CD8-positive, alpha-beta T cell (primary cell): ENCODE measurements at regions of chr14 and their contacts with region 1.

Region 1: DNA sequence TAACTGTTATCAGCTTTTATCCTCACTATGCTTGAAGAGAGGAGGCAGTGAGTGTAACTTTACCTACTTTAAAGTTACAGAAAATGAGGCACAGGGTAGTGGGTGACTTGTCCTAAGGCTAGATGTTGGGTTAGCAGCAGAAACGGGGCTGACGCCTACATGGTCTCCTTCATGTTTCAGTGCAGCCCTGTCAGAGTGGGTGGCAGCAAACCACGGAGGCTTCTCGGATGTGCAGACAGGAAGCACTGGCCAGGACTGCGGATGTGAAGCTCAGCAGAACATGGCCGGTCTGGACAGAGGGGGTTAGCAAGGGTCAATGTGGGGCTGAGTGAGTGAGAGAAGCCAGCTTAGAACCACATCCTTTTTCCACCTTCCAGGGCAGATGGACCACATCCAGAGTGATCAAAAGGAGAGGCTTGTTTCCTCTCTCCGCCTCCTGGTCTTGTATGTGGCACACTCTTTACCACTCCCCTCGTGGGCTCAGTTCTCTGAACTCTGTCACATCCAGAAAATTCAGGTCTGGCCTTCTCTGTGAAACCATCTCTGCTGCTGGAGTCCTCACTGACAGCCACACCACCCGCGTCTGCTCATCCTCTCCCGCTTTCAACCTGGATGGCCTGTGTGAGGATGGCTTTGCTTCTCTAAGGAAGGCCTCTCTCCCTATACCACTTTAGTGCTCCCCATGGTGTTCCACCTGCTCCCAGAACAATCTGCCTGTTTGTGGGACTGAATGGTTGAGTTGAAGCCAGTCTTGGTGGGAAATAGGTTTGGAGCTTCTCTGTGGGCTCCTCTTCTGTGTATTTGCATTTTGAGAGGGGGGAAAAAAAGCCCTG is 14.1 kb downstream of the SUSD6 start:
- DNase-seq: peak; percentile 37 to 81 (median 71)
- ATAC-seq: peak; percentile 90
- H3K4me3 ChIP-seq: peak overlapping the region; percentile 9 to 21
- H3K4me3 Mint-ChIP-seq: peak overlapping the region; percentile 74
- H3K27ac ChIP-seq: peak overlapping the region; percentile 39 to 75
- H3K27ac Mint-ChIP-seq: peak overlapping the region; percentile 90
- H3K4me1 ChIP-seq: peaks cover 70% of the 10 kb centered on the region
- H3K4me1 Mint-ChIP-seq: peaks cover 87% of the 10 kb centered on the region
- H3K27me3 ChIP-seq: no peaks in the 10 kb centered on the region
- H3K27me3 Mint-ChIP-seq: no peaks in the 10 kb centered on the region
- CTCF ChIP-seq: no peak

Region 2: GRCh38 chr14:69666690-69667239 is 41.2 kb after region 1 on chr14:
- CTCF ChIA-PET with region 1: interaction called, 3 read pairs
- POLR2A ChIA-PET with region 1: no interaction called
- intact Hi-C with region 1: loop called (anchors 5 kb)
- DNase-seq: no peak
- ATAC-seq: no peak
- H3K4me3 ChIP-seq: no peak overlapping the region
- H3K4me3 Mint-ChIP-seq: peak overlapping the region; percentile 46
- H3K27ac ChIP-seq: no peak overlapping the region
- H3K27ac Mint-ChIP-seq: peak overlapping the region; percentile 65
- H3K4me1 ChIP-seq: peaks cover 39% of the 10 kb centered on the region
- H3K4me1 Mint-ChIP-seq: peaks cover 88% of the 10 kb centered on the region
- H3K27me3 ChIP-seq: no peaks in the 10 kb centered on the region
- H3K27me3 Mint-ChIP-seq: no peaks in the 10 kb centered on the region
- CTCF ChIP-seq: no peak

Region 3: DNA sequence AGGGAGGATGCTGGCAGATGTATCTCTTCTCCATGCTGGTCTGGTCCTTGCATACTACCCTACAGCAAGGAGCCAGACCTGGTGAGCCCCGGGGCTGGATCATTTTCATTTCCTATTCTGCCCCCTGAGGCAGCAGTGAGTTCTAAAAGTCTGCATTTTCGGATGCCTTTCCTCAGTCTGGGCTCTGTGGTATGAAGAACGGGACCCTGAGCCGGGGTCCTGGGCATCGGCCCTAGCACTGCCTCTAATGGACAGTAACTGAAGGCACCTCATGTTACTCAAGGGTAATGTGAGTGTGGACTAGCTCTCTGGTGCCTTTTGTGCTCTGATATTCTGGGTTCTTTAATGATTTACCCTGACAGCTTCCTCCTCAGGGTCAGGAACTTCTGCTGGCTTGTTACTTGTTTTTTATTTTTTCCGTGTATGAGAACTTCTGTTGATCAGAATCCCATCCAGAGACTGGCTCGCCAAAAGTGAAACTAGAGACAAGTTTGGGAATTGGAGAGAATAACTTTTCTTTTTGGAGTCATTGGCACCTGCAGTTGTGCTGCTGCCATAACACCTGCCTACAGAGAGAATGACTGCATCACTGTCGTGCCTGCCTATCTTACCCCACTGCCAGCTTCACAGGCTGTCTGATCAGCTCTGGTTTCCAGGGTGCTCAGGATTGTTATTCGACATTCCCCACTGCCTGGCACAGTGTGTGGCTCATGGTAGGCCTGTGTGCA is 48.2 kb after region 1 on chr14:
- CTCF ChIA-PET with region 1: interaction called, 3 read pairs
- POLR2A ChIA-PET with region 1: interaction called, 3 read pairs
- intact Hi-C with region 1: loop called in 1 of 2 experiments (anchors 5 kb)
- DNase-seq: peak in 1 of 9 experiments; percentile 12
- ATAC-seq: no peak
- H3K4me3 ChIP-seq: no peak overlapping the region
- H3K4me3 Mint-ChIP-seq: peak overlapping the region; percentile 10
- H3K27ac ChIP-seq: peak overlapping the region in 1 of 2 experiments; percentile 41
- H3K27ac Mint-ChIP-seq: peak overlapping the region; percentile 64
- H3K4me1 ChIP-seq: peaks cover 64% of the 10 kb centered on the region
- H3K4me1 Mint-ChIP-seq: peaks cover 74% of the 10 kb centered on the region
- H3K27me3 ChIP-seq: no peaks in the 10 kb centered on the region
- H3K27me3 Mint-ChIP-seq: no peaks in the 10 kb centered on the region
- CTCF ChIP-seq: no peak